BJ (cell line): ENCODE measurements at regions of chr1 and their contacts with region 1.

Region 1: GRCh38 chr1:156226116-156226538 is 13.3 kb downstream of the PMF1 start:
- DNase-seq: no peak
- H3K4me3 ChIP-seq: no peak overlapping the region
- H3K27me3 ChIP-seq: no peaks in the 10 kb centered on the region
- CTCF ChIP-seq: no peak

Region 2: DNA sequence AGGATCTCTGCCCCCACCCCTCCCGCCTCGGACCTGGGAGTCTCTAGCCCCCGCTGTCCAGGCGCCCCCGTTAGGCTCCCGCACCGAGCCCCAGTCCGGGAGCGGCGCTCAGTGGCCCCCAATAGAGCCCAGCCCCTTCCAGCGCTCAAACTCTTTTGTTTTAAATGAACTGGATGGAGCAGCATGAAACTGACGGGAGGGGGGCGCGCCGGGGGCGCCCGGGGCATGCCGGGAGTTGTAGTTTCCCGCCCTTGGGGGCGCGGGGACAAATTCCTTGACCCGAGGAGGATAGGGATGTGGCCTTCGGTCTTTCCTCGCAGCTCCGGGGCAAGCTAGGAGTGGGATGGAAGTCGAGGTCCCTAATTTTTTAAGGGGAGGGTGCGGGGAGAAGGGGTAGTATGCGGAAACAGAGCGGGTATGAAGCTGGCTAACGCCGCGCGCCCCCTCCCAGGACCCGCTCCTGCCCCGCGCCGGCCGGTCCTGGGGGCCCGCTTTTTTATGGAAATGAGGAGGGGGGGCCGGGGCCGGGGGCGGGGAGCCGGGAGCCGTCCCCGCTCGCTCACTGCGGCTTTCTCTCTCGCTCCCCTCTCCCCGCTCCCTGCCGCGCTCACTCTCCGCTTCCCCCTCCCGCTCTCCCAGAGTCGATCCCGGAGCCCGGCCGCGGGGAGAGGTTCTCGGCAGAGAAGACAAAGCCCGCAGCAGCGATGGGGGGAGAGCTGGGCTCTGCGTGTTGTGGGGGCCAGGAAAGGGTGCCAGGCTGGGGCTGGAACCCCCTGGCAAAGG is 143.6 kb before region 1 on chr1 and contains the start of gene MEX3A:
- CTCF ChIA-PET with region 1: interaction called, 25 read pairs
- POLR2A ChIA-PET with region 1: no interaction called
- DNase-seq: no peak
- H3K4me3 ChIP-seq: peak within 1 kb of the TSS; percentile 64
- H3K27me3 ChIP-seq: no peaks in the 10 kb centered on the region
- CTCF ChIP-seq: no peak
- polyA plus RNA-seq, gene MEX3A: 1.9 TPM in 2 replicates

Region 3: GRCh38 chr1:156090822-156091188 is 135.3 kb before region 1 on chr1:
- CTCF ChIA-PET with region 1: interaction called, 154 read pairs
- POLR2A ChIA-PET with region 1: no interaction called
- DNase-seq: no peak
- H3K4me3 ChIP-seq: no peak overlapping the region
- H3K27me3 ChIP-seq: no peaks in the 10 kb centered on the region
- CTCF ChIP-seq: peak; percentile 72

Region 4: GRCh38 chr1:156096640-156097391 is 129.3 kb before region 1 on chr1:
- CTCF ChIA-PET with region 1: interaction called, 154 read pairs
- POLR2A ChIA-PET with region 1: no interaction called
- DNase-seq: no peak
- H3K4me3 ChIP-seq: no peak overlapping the region
- H3K27me3 ChIP-seq: no peaks in the 10 kb centered on the region
- CTCF ChIP-seq: peak; percentile 99

Region 5: GRCh38 chr1:156129706-156130581 is 96.2 kb before region 1 on chr1:
- CTCF ChIA-PET with region 1: interaction called, 11 read pairs
- POLR2A ChIA-PET with region 1: no interaction called
- DNase-seq: peak; percentile 91
- H3K4me3 ChIP-seq: peak overlapping the region; percentile 15; the same call in 1 of the 2 replicates
- H3K27me3 ChIP-seq: no peaks in the 10 kb centered on the region
- CTCF ChIP-seq: peak; percentile 94

Region 6: GRCh38 chr1:156146020-156146768 is 79.9 kb before region 1 on chr1:
- CTCF ChIA-PET with region 1: interaction called, 112 read pairs
- POLR2A ChIA-PET with region 1: no interaction called
- DNase-seq: peak; percentile 78
- H3K4me3 ChIP-seq: no peak overlapping the region
- H3K27me3 ChIP-seq: no peaks in the 10 kb centered on the region; the same call in none of the 2 replicates
- CTCF ChIP-seq: peak; percentile 73

Region 7: GRCh38 chr1:156212833-156213643 is 13.1 kb before region 1 on chr1 and contains the start of gene PMF1:
- CTCF ChIA-PET with region 1: interaction called, 37 read pairs
- POLR2A ChIA-PET with region 1: no interaction called
- DNase-seq: peak; percentile 83
- H3K4me3 ChIP-seq: peak within 1 kb of the TSS; percentile 47
- H3K27me3 ChIP-seq: no peaks in the 10 kb centered on the region
- CTCF ChIP-seq: no peak
- polyA plus RNA-seq, gene PMF1: 55.0 and 73.1 TPM in 2 replicates

Region 8: GRCh38 chr1:156338180-156338973 is 112.2 kb after region 1 on chr1 and contains the starts of genes CCT3 and TSACC:
- CTCF ChIA-PET with region 1: no interaction called
- POLR2A ChIA-PET with region 1: no interaction called
- DNase-seq: peak; percentile 99
- H3K4me3 ChIP-seq: peak within 1 kb of the TSS; percentile 91
- H3K27me3 ChIP-seq: no peaks in the 10 kb centered on the region
- CTCF ChIP-seq: no peak
- polyA plus RNA-seq, gene CCT3: 275 and 299 TPM in 2 replicates
- polyA plus RNA-seq, gene TSACC: 0.52 and 0.59 TPM in 2 replicates

Region 9: DNA sequence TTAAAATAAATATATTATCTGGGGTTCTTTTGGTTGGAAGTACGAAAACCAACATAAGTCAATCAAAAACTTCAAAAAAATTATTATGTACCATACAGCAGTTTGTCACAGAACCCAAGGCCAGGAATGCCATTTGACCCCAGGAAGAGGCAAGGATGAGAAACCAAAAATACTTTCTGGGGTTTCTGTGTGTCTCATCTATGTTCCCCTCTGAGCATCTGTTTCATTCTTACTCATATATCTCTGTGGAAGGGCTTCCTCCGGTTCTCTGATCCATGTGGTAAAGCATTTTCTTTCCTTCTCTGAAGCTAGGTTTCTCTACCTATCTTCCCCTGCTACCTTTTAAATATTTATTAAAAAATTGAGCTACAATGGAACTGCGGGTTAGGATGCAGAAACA is 1603.6 kb after region 1 on chr1:
- CTCF ChIA-PET with region 1: no interaction called
- POLR2A ChIA-PET with region 1: no interaction called
- DNase-seq: no peak
- H3K4me3 ChIP-seq: no peak overlapping the region
- H3K27me3 ChIP-seq: no peaks in the 10 kb centered on the region
- CTCF ChIP-seq: no peak